ENCODE measurements at regions of chr16 and their contacts with region 1.

Region 1: GRCh38 chr16:77236063-77236511 is 36.9 kb downstream of the SYCE1L start:
- DNase-seq: peak; percentile 92
- H3K4me3 ChIP-seq: peak overlapping the region; percentile 20 to 31
- H3K27ac ChIP-seq: no peak overlapping the region
- H3K4me1 ChIP-seq: no peaks in the 10 kb centered on the region
- H3K27me3 ChIP-seq: no peaks in the 10 kb centered on the region
- CTCF ChIP-seq: peak; percentile 91 to 95 (median 94)
- POLR2A ChIP-seq: no peak

Region 2: DNA sequence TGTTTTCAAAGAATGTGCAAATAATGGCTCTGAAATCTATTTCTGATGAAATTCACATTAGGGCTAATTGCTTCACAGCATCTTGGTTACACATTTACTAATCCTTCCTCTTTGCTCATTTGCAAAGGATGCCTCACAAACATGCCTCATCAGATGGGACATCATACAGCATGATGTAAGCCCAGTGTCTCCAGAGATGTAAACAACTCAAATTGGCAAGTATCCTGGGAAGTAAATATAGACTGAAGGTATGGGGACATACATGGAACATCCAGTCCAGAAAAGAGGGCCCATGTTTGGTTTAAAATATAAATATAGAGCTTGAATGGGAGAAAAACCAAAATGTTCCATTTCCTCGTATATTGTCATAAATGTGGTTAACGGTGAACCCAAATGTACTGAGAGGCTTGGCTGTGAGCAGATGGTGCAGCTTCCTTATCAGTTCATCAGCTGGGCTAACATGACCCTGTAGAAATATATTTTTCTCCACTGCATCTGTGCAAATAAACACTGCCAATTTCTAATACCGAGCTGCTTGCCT is 343.3 kb after region 1 on chr16:
- intact Hi-C with region 1: loop called (anchors 5 kb)
- DNase-seq: no peak
- H3K4me3 ChIP-seq: no peak overlapping the region
- H3K27ac ChIP-seq: no peak overlapping the region
- H3K4me1 ChIP-seq: no peaks in the 10 kb centered on the region
- H3K27me3 ChIP-seq: no peaks in the 10 kb centered on the region
- CTCF ChIP-seq: no peak
- POLR2A ChIP-seq: no peak